ENCODE measurements at regions of chr14 and their contacts with region 1.

Region 1: GRCh38 chr14:24141097-24141880 is at the start of gene EMC9:
- DNase-seq: peak; percentile 100
- H3K4me3 Mint-ChIP-seq: peak within 1 kb of the TSS; percentile 93
- H3K27ac Mint-ChIP-seq: peak within 1 kb of the TSS; percentile 92
- H3K4me1 Mint-ChIP-seq: peaks cover 73% of the 10 kb centered on the region
- H3K27me3 Mint-ChIP-seq: no peaks in the 10 kb centered on the region
- total RNA-seq, gene EMC9: 45.0 to 51.7 TPM

Region 2: DNA sequence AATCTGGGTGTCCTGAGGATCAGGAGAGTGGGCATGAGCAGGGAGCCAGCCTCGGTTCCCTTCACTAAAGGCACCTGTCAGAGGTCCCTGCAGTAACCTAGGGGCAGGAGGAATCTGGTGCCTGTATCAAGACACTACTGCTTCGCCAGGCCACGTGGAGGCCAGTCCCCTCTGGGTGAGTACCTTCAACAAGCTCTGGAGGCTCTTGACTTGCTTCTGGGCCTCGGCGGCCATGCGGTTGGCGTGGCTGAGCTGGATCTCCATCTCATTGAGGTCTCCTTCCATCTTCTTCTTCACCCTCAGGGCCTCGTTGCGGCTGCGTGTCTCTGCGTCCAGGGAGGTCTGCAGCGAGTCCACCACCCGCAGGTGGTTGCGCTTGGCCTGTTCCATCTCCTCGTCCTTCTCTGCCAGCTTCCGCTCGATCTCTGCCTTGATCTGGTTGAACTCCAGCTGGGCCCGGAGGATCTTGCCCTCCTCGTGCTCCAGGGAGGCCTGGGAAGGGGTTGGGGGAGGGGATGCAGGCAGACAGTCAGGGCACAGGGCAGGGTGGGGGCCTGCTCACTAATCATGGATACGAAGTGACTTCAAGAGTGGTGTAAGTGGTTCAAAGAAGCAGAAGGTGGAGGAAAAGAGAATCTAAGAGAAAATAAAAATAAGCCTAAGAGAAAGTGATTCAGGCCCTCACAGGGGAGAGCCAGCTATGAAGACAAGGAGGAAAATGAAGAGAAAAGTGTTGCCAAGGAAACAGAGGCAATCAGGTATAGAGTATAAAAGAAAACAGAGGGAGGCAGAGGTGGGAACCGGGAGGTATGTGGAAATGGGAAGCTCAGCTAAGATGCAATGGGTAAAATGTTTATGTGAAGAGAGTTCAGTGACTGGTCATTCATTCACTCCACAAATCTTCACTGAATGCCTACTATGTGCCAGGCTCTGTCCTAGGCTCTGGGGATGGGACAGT is 725.2 kb before region 1 on chr14:
- CTCF ChIA-PET with region 1: no interaction called
- POLR2A ChIA-PET with region 1: no interaction called
- DNase-seq: no peak
- H3K4me3 Mint-ChIP-seq: no peak overlapping the region
- H3K27ac Mint-ChIP-seq: no peak overlapping the region
- H3K4me1 Mint-ChIP-seq: peaks cover 9% of the 10 kb centered on the region
- H3K27me3 Mint-ChIP-seq: no peaks in the 10 kb centered on the region

Region 3: GRCh38 chr14:23816371-23816770 is 324.9 kb before region 1 on chr14:
- CTCF ChIA-PET with region 1: no interaction called
- POLR2A ChIA-PET with region 1: no interaction called
- DNase-seq: no peak
- H3K4me3 Mint-ChIP-seq: no peak overlapping the region
- H3K27ac Mint-ChIP-seq: no peak overlapping the region
- H3K4me1 Mint-ChIP-seq: no peaks in the 10 kb centered on the region
- H3K27me3 Mint-ChIP-seq: no peaks in the 10 kb centered on the region

Region 4: DNA sequence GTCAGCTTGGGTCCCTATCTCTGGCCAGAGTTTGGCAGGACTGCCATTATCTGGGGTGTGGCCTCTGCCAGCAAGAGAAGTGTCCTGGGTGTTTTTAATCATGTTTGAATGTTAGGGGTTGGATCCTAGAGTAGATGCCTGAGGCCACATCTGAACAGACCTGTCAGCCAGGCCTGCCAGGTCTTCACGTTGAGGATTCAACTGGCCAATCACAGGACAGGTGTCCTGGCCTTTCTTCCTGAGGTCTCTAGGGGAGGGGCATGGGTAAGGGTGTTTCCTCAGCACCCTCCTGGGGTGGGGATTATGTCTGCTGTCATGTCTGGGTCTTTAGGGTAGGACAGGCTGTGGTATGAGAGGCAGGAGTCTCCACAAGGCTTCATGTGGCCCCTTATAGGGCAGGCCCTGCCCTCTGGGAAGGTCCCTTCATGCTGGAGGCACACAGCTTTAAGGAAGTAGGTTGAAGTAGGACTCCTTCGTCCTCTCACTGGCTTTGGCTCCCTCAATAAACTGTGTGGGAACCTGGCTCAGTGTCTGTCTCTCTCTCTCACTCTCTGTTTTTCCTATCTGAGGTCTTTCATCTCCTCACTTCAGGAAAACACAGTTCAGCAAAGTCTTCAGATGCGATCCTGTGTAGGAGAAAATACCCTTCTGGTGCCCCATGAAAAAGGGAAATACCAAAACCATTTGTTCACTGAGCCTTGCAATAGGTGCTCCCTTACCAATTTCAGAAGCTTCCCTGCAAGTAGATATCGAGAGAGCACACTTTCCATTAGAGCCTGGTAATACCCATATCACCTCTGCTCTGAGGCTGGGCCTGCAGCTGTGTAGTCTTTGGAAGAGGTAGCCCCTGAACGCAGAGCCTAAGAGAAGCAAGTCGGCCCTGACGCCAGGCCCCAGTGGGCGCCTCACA is 17.5 kb before region 1 on chr14:
- CTCF ChIA-PET with region 1: interaction called, 4 read pairs
- POLR2A ChIA-PET with region 1: interaction called, 448 read pairs
- DNase-seq: no peak
- H3K4me3 Mint-ChIP-seq: no peak overlapping the region
- H3K27ac Mint-ChIP-seq: no peak overlapping the region
- H3K4me1 Mint-ChIP-seq: no peaks in the 10 kb centered on the region
- H3K27me3 Mint-ChIP-seq: no peaks in the 10 kb centered on the region

Measured in activated CD4-positive, alpha-beta memory T cell treated with anti-CD3 and anti-CD28 coated beads, Interleukin-2, amount 10 ng/mL, durations not matched to agents 7 days and 5 days (primary cell).